Caco-2 (cell line): ENCODE measurements at regions of chr20 and their contacts with region 1.

Region 1: GRCh38 chr20:6081236-6081635 is 27.4 kb upstream of the LRRN4 start:
- DNase-seq: no peak
- H3K4me3 ChIP-seq: no peak overlapping the region
- H3K4me3 Mint-ChIP-seq: no peak overlapping the region
- H3K27ac Mint-ChIP-seq: no peak overlapping the region
- H3K4me1 ChIP-seq: peaks cover 9% of the 10 kb centered on the region
- H3K4me1 Mint-ChIP-seq: no peaks in the 10 kb centered on the region
- H3K27me3 ChIP-seq: no peaks in the 10 kb centered on the region
- H3K27me3 Mint-ChIP-seq: no peaks in the 10 kb centered on the region
- CTCF ChIP-seq: no peak

Region 2: GRCh38 chr20:5881714-5882113 is 199.5 kb before region 1 on chr20:
- CTCF ChIA-PET with region 1: no interaction called
- POLR2A ChIA-PET with region 1: no interaction called
- intact Hi-C with region 1: no loop called
- DNase-seq: no peak
- H3K4me3 ChIP-seq: no peak overlapping the region
- H3K4me3 Mint-ChIP-seq: no peak overlapping the region
- H3K27ac Mint-ChIP-seq: no peak overlapping the region
- H3K4me1 ChIP-seq: no peaks in the 10 kb centered on the region
- H3K4me1 Mint-ChIP-seq: no peaks in the 10 kb centered on the region
- H3K27me3 ChIP-seq: no peaks in the 10 kb centered on the region
- H3K27me3 Mint-ChIP-seq: peaks cover 19% of the 10 kb centered on the region
- CTCF ChIP-seq: no peak

Region 3: DNA sequence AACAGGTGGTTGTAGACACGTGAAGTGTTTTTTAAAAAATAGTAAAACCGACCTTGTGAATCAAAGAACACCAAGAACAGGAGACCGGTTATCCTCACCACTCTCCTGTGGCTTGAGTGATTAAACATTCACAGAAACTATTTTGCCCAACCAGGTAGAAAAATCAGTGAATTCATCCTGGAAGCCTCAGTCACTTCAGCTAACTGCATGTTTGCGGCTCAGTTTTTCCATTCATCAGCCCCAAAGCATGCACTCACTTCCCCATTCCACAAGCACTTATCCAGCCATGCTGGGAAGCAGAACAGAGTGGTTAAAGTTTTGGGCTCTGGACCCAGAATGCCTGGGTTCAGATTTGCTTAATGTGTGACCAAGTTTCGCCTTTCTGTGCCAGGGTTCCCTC is 29.7 kb before region 1 on chr20:
- CTCF ChIA-PET with region 1: no interaction called
- POLR2A ChIA-PET with region 1: no interaction called
- intact Hi-C with region 1: no loop called
- DNase-seq: no peak
- H3K4me3 ChIP-seq: peak overlapping the region; percentile 71
- H3K4me3 Mint-ChIP-seq: peak overlapping the region; percentile 77
- H3K27ac Mint-ChIP-seq: no peak overlapping the region
- H3K4me1 ChIP-seq: peaks cover 47% of the 10 kb centered on the region
- H3K4me1 Mint-ChIP-seq: peaks cover 28% of the 10 kb centered on the region
- H3K27me3 ChIP-seq: no peaks in the 10 kb centered on the region
- H3K27me3 Mint-ChIP-seq: no peaks in the 10 kb centered on the region
- CTCF ChIP-seq: no peak

Region 4: DNA sequence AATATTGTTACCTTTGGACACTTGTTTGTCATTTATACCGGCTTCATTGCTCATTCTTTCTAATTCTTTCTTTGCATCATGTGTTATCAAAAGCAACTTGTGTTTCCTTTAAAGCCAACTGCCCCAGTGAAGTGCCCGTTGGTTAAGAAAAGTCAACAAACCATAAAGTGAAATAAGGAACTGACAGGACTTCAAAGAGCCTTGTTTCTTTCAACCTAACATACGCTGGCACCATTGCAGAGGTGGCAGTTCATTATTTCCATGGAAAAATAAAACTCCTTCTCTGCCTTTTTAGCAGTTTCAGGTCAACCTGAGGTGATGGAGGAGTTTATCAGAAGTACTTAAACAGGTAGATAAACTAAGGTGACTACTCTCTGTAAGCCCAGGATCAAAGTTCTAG is 12.8 kb after region 1 on chr20:
- CTCF ChIA-PET with region 1: no interaction called
- POLR2A ChIA-PET with region 1: interaction called, 11 read pairs
- intact Hi-C with region 1: no loop called
- DNase-seq: no peak
- H3K4me3 ChIP-seq: no peak overlapping the region
- H3K4me3 Mint-ChIP-seq: no peak overlapping the region
- H3K27ac Mint-ChIP-seq: no peak overlapping the region
- H3K4me1 ChIP-seq: no peaks in the 10 kb centered on the region
- H3K4me1 Mint-ChIP-seq: no peaks in the 10 kb centered on the region
- H3K27me3 ChIP-seq: no peaks in the 10 kb centered on the region
- H3K27me3 Mint-ChIP-seq: no peaks in the 10 kb centered on the region
- CTCF ChIP-seq: no peak

Region 5: GRCh38 chr20:6253396-6253795 is 172.2 kb after region 1 on chr20:
- CTCF ChIA-PET with region 1: no interaction called
- POLR2A ChIA-PET with region 1: no interaction called
- intact Hi-C with region 1: no loop called
- DNase-seq: no peak
- H3K4me3 ChIP-seq: no peak overlapping the region
- H3K4me3 Mint-ChIP-seq: no peak overlapping the region
- H3K27ac Mint-ChIP-seq: no peak overlapping the region
- H3K4me1 ChIP-seq: no peaks in the 10 kb centered on the region
- H3K4me1 Mint-ChIP-seq: no peaks in the 10 kb centered on the region
- H3K27me3 ChIP-seq: no peaks in the 10 kb centered on the region
- H3K27me3 Mint-ChIP-seq: peaks cover 7% of the 10 kb centered on the region
- CTCF ChIP-seq: no peak

Region 6: GRCh38 chr20:6501061-6501460 is 419.8 kb after region 1 on chr20:
- CTCF ChIA-PET with region 1: no interaction called
- POLR2A ChIA-PET with region 1: interaction called, 10 read pairs
- intact Hi-C with region 1: no loop called
- DNase-seq: no peak
- H3K4me3 ChIP-seq: no peak overlapping the region
- H3K4me3 Mint-ChIP-seq: no peak overlapping the region
- H3K27ac Mint-ChIP-seq: no peak overlapping the region
- H3K4me1 ChIP-seq: no peaks in the 10 kb centered on the region; the same call in 1 of the 2 replicates
- H3K4me1 Mint-ChIP-seq: peaks cover 7% of the 10 kb centered on the region
- H3K27me3 ChIP-seq: no peaks in the 10 kb centered on the region
- H3K27me3 Mint-ChIP-seq: no peaks in the 10 kb centered on the region
- CTCF ChIP-seq: no peak